ENCODE measurements at regions of chr6 and their contacts with region 1.

Region 1: DNA sequence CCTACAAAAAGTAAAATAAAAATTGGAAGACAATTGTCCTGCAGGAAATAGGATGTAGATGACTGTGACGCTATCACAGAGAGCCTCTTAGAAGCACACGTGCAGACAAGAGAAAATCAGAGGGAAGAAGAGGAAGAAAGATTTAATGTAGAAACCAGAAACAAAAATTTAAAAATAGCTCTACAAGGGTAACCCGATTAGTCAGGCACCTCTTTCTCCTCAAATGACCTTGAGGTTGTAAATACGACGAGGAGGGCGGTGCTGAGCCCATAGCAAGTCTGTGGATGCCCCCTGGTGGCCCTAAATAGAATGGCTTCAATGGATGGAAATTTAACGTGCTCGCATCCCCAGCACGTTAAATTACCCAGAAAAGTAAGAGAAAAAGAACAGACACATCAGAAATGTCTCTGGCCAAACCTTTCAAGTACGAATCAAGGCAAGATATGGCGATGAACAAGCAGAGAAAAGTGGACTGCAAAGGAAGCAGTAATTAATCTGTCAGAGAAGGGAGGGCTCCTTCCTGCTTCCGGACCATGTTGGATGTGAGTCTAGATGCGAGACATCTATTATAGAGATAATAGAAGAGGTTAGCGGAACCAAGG is 4.2 kb upstream of the PRPH2 start:
- DNase-seq: peak; percentile 42 to 94 (median 79)

Region 2: DNA sequence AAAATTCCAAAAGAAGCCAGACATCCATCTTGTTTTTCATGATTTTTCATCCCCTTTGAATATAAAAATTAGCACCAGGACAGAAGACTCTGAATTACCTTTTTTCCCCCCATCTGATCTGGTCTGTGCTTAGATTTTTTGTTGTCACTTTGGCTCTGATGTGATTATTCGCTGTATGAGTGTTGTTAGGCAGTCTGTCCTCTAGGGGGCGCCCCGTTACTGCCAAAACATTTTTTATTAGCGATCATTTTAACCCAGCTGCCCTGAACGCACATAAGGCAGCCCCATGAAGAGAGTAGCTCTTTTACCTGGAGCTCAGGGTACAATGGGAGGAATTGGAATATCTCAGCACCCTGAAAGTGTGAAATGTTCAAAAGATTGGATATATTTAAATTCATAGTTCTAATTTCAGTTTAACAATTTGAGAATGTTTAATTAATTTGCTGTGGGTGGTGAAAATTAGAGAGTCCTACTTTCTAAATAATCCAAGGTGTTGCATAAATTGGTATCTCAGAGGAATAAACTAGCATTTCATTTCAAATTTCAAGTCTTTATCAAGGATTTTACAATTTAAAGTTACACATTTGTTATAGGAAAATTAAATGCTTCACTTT is 64.9 kb before region 1 on chr6:
- intact Hi-C with region 1: loop called (anchors 5 kb)
- DNase-seq: peak; percentile 40 to 94 (median 82)

Region 3: DNA sequence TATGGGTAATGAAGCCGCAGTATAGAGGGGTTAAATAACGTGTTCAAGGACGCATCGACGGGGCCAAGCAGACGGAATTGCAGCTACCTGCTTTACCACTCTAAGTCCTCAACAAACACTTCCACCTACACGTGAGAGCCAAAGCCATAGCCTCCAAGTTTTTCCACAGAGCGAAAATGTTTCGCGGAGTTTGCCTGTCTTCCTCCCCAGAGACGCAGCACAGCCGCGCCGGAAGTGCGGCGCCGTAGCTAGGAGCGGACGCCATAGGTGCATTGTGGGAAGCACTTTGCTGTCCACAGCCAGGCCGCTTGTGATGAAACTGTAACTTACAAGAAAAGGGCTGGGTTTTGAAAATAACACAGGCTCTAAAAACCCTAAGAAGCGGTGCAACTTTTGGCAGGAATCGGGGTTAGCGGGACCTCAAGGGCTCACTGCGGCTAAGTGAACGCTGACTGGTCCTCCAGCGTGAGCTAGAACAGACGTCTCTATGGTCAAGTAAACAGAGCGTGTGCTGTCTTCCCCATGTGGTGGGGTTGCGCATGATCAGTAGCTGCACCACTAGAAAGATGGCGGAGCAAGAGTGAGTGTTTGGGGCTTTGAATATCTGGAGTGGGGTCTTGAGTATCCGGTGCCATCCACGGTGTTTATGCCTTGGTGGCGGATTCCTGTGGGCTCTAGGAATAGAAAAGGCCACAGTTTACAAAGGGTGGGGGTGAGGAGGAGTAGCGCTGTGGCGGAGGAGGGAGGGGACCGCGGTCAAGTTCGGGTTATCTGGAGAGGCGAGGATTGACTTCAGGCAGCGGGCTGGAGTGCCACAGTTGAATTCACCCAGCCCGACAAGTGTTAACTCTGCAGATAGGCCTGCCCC is 153.0 kb after region 1 on chr6 and contains the start of gene RPL7L1:
- intact Hi-C with region 1: loop called (anchors 10 kb)
- DNase-seq: peak; percentile 83 to 95 (median 90)

Measured in head of caudate nucleus (tissue), 42 donors.